AG04450 (cell line): ENCODE measurements at regions of chr4 and their contacts with region 1.

Region 1: DNA sequence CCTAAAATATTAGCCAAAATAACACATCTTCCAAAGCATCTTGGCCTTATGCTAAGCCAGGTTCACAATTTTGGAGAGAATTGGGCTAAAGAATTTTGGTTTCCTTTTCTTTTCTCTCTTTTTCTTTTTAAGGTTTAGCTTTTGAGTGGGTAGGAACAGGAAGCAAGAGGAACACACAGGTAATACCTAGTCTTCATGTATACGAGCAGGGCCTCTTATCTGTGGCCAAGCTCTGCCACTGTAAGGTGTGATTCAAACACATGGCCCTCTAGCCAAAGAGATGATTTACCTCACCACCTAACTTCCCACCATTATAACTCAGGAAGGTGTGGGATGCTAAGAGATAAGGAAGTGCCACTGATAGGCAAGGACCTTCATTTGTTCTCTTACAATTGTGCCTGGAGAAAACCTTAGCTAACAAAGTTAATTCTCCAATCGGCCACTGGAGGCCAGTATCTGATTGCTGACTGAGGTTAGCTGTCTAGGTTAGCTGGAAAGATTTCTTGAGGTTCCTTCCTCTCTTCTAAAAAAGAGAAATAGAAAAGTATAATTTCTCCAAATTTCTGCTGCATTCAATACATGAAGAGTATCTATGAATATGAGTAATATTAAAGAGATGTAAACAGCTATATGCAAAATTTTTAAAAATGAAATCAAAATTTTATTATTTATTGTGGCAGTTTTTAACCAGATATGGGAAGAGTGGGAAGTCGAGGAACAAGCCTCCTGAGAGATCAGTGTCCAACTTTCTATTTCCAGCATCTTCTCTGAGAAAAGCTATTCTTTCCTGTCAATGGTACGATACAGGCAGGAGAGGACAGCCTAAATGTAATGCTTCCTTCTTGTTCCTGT is 30.1 kb upstream of the BBS7 start:
- DNase-seq: peak; percentile 36
- H3K4me3 ChIP-seq: no peak overlapping the region
- H3K27ac ChIP-seq: no peak overlapping the region
- H3K27me3 ChIP-seq: no peaks in the 10 kb centered on the region
- CTCF ChIP-seq: peak; percentile 84

Region 2: DNA sequence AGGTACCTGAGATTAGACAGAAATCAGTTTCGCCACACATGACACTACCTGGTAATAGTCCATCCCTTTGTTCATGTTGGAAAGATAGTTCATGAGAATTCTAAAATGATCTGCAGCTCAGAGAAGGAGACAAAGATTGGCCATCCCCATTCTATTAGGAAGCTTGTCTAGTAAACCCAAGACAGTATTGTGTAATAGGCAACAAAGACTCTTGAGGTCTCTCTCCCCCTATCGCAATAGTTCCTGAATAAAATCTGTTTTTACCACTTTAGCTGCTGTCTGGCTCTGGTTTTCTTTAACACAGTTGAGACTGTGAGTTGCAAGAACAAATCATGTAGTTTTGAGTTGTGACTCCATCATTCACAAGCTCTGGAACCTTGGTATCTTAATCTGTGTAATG is 15.2 kb before region 1 on chr4:
- CTCF ChIA-PET with region 1: interaction called, 14 read pairs
- POLR2A ChIA-PET with region 1: no interaction called
- DNase-seq: no peak
- H3K4me3 ChIP-seq: no peak overlapping the region
- H3K27ac ChIP-seq: no peak overlapping the region
- H3K27me3 ChIP-seq: no peaks in the 10 kb centered on the region
- CTCF ChIP-seq: no peak

Region 3: DNA sequence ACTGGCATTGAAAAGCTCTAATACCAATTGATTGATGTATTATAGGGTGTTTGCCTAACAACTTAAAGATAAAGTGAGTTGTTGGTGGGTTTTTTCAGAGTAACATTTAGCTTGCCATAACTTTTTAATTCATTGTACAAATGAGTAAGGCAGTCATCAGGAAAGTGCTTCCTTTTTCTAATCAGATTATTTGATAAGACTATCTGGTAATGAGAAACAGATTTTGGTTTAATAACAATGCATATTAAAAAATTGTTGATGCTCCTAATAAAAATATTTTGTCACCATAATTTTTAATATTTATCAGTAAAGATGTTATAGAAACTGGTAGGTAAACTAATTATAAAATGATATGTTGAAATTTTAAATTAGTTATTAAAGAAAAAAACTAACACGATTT is 303.0 kb after region 1 on chr4:
- CTCF ChIA-PET with region 1: interaction called, 10 read pairs
- POLR2A ChIA-PET with region 1: no interaction called
- DNase-seq: no peak
- H3K4me3 ChIP-seq: no peak overlapping the region
- H3K27ac ChIP-seq: no peak overlapping the region
- H3K27me3 ChIP-seq: no peaks in the 10 kb centered on the region
- CTCF ChIP-seq: no peak

Region 4: GRCh38 chr4:122224348-122224747 is 324.0 kb after region 1 on chr4:
- CTCF ChIA-PET with region 1: interaction called, 52 read pairs
- POLR2A ChIA-PET with region 1: no interaction called
- DNase-seq: peak; percentile 3
- H3K4me3 ChIP-seq: no peak overlapping the region
- H3K27ac ChIP-seq: no peak overlapping the region
- H3K27me3 ChIP-seq: no peaks in the 10 kb centered on the region
- CTCF ChIP-seq: peak; percentile 55

Region 5: DNA sequence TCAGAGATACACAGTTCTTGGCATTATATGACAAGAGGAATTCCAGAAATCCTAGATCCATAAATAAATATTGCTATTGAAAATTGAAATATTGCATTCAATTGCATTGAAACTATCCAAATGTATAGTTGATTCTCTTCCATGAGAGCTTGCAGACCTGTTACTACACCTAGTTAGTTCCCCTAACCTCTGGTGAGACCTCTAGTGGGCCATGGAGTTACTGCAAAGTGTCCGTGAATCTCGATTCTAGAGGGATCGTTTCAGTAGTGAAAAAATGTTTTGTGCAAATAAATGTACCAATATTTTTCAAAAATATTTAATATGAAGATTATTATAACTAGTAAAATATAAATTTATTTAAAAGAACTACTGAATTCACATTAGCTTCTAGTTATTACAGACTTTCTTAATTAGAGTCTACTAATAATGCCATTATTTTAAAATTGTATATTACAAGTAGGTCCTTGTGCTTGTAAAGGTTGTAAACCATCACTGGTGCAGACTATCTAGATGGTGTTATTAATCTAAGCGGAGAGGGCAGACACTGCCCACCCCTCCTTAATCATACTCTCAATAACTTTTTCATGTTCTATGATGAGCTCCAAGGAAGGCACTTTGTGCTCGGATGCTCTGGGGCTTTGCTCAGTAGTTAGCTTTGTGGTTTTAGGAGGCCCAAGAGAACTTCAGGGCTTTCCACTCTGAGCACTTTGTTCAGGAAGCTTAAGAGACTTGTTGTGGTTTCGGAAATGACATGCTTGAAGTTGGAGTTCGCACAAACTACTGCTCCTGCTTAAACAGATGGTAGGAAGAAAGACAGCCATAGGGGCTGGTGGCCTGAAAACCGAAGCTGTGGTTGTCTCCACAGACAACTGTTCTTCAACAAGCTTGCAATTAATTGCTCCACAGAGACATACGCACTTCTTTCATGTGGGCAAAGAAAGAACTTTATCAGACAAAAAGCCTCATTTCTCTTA is 677.7 kb after region 1 on chr4:
- CTCF ChIA-PET with region 1: interaction called, 42 read pairs
- POLR2A ChIA-PET with region 1: no interaction called
- DNase-seq: no peak
- H3K4me3 ChIP-seq: no peak overlapping the region
- H3K27ac ChIP-seq: no peak overlapping the region
- H3K27me3 ChIP-seq: peaks cover 3% of the 10 kb centered on the region
- CTCF ChIP-seq: peak; percentile 76